IMR-90 (cell line): ENCODE measurements at regions of chr1 and their contacts with region 1.

Region 1: DNA sequence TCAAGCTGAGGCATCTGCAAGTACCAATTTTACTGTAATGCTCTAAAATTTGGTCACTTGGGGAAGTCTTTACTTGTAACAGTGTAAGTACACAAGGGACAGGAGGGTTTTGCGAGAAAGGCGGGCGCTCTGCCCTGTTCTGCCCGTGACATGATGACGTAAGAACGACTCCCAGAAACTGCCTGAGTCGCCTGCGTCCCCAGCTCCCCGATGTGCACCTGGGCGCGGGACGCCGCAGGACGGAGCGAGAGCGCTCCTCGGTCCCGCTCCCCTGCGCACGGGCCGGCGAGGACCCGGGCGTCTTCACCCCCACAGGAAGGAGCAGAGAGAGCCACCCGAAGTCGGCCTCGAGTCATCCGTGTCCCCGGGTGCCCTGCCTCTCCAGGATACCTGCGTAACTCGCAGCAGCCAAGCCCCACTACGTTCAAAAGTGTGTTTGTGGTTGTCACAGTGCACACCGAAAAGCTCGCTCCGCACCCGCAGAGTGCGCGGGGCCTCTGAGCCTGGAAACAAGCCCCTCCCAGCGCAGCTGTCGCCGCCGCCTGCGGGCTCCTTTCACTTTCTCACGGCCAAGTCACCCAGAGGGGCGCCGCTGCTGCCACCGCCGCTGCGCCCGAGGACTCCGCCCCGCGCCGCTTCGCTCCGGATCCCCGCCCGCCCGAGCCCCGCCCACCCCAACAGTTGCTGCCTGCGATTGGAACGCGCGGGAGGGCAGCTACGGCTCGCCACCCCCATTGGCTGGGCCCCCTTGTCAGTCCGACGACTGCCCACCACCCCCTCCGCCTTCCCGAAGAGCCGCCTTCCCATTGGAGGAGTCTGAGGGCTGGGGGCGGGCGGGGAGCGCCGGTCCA is 3.2 kb upstream of the ZBTB18 start:
- DNase-seq: peak; percentile 99
- ATAC-seq: peak; percentile 97
- H3K4me3 ChIP-seq: peak overlapping the region; percentile 96
- H3K27ac ChIP-seq: peak overlapping the region; percentile 80
- H3K4me1 ChIP-seq: peaks cover 2% of the 10 kb centered on the region; the same call in 1 of the 2 replicates
- H3K27me3 ChIP-seq: peaks cover 6% of the 10 kb centered on the region
- CTCF ChIP-seq: no peak
- POLR2A ChIP-seq: peak; percentile 59; the same call in 1 of the 2 replicates
- RAD21 ChIP-seq: no peak

Region 2: GRCh38 chr1:243471754-243472745 is 575.8 kb before region 1 on chr1:
- CTCF ChIA-PET with region 1: no interaction called
- POLR2A ChIA-PET with region 1: no interaction called
- dilution Hi-C with region 1: no loop called
- in situ Hi-C with region 1: no loop called
- intact Hi-C with region 1: loop called (anchors 10 kb)
- DNase-seq: peak; percentile 56
- ATAC-seq: no peak
- H3K4me3 ChIP-seq: no peak overlapping the region
- H3K27ac ChIP-seq: no peak overlapping the region
- H3K4me1 ChIP-seq: peaks cover 11% of the 10 kb centered on the region
- H3K27me3 ChIP-seq: no peaks in the 10 kb centered on the region
- CTCF ChIP-seq: no peak
- POLR2A ChIP-seq: no peak
- RAD21 ChIP-seq: no peak

Region 3: GRCh38 chr1:243917177-243917862 is 130.5 kb before region 1 on chr1:
- CTCF ChIA-PET with region 1: no interaction called
- POLR2A ChIA-PET with region 1: no interaction called
- dilution Hi-C with region 1: no loop called
- in situ Hi-C with region 1: no loop called
- intact Hi-C with region 1: loop called (anchors 5 kb)
- DNase-seq: peak; percentile 93
- ATAC-seq: peak; percentile 97
- H3K4me3 ChIP-seq: peak overlapping the region; percentile 51
- H3K27ac ChIP-seq: peak overlapping the region; percentile 27
- H3K4me1 ChIP-seq: peaks cover 8% of the 10 kb centered on the region
- H3K27me3 ChIP-seq: no peaks in the 10 kb centered on the region
- CTCF ChIP-seq: 0 out of 2 replicates have a peak, but pooled peaks have one; percentile 11
- POLR2A ChIP-seq: peak; percentile 92
- RAD21 ChIP-seq: peak; percentile 15; the same call in 1 of the 2 replicates

Region 4: GRCh38 chr1:244214009-244214967 is 166.4 kb after region 1 on chr1:
- CTCF ChIA-PET with region 1: no interaction called
- POLR2A ChIA-PET with region 1: no interaction called
- dilution Hi-C with region 1: no loop called
- in situ Hi-C with region 1: no loop called
- intact Hi-C with region 1: loop called (anchors 5 kb)
- DNase-seq: peak; percentile 98
- ATAC-seq: peak; percentile 95
- H3K4me3 ChIP-seq: no peak overlapping the region
- H3K27ac ChIP-seq: peak overlapping the region; percentile 95
- H3K4me1 ChIP-seq: peaks cover 7% of the 10 kb centered on the region
- H3K27me3 ChIP-seq: no peaks in the 10 kb centered on the region
- CTCF ChIP-seq: no peak
- POLR2A ChIP-seq: no peak
- RAD21 ChIP-seq: 0 out of 2 replicates have a peak, but pooled peaks have one; percentile 8